CD8-positive, alpha-beta T cell (primary cell): ENCODE measurements at regions of chr10 and their contacts with region 1.

Region 1: GRCh38 chr10:28991326-28992270 is 297.3 kb upstream of the LYZL1 start:
- DNase-seq: peak in 7 of 9 experiments; percentile 5 to 47 (median 27)
- ATAC-seq: no peak
- H3K4me3 ChIP-seq: no peak overlapping the region
- H3K4me3 Mint-ChIP-seq: no peak overlapping the region
- H3K27ac ChIP-seq: no peak overlapping the region
- H3K27ac Mint-ChIP-seq: no peak overlapping the region
- H3K4me1 ChIP-seq: no peaks in the 10 kb centered on the region
- H3K4me1 Mint-ChIP-seq: no peaks in the 10 kb centered on the region
- H3K27me3 ChIP-seq: no peaks in the 10 kb centered on the region
- H3K27me3 Mint-ChIP-seq: peaks cover 9% of the 10 kb centered on the region
- CTCF ChIP-seq: no peak

Region 2: GRCh38 chr10:28676968-28677887 is 314.4 kb before region 1 on chr10 and contains the start of gene BAMBI:
- CTCF ChIA-PET with region 1: no interaction called
- POLR2A ChIA-PET with region 1: interaction called, 4 read pairs
- intact Hi-C with region 1: loop called in 1 of 2 experiments (anchors 5 kb)
- DNase-seq: peak; percentile 76 to 95 (median 88)
- ATAC-seq: peak; percentile 96
- H3K4me3 ChIP-seq: peak within 1 kb of the TSS; percentile 53 to 59
- H3K4me3 Mint-ChIP-seq: peak within 1 kb of the TSS; percentile 86
- H3K27ac ChIP-seq: no peak within 1 kb of the TSS
- H3K27ac Mint-ChIP-seq: no peak within 1 kb of the TSS
- H3K4me1 ChIP-seq: peaks cover 34% of the 10 kb centered on the region
- H3K4me1 Mint-ChIP-seq: peaks cover 31% of the 10 kb centered on the region
- H3K27me3 ChIP-seq: peaks cover 19 to 20% of the 10 kb centered on the region in 2 experiments
- H3K27me3 Mint-ChIP-seq: peaks cover 68% of the 10 kb centered on the region
- CTCF ChIP-seq: peak; percentile 40
- total RNA-seq, gene BAMBI: 3.5 to 3.6 TPM

Region 3: DNA sequence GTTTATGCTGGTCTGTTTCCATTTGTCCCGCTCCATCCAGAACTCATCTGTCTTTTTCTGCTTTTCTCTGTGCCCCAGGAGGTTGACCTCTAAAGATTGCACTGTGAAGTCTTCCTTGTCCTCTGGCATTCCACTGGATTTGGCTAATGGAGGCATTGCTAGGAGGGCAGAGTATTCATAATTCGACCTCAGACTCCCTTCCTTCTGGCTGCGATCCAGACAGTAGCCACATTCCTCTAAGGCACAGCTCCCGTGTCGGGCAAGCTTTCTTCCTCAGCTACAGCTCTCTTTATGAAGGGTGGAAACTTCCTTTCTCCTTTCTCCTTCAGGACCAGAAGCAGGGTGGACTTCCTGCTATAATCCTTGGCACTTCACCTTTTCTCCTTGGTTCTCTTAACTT is 138.4 kb before region 1 on chr10:
- CTCF ChIA-PET with region 1: no interaction called
- POLR2A ChIA-PET with region 1: no interaction called
- intact Hi-C with region 1: no loop called
- DNase-seq: no peak
- ATAC-seq: no peak
- H3K4me3 ChIP-seq: no peak overlapping the region
- H3K4me3 Mint-ChIP-seq: no peak overlapping the region
- H3K27ac ChIP-seq: no peak overlapping the region
- H3K27ac Mint-ChIP-seq: no peak overlapping the region
- H3K4me1 ChIP-seq: no peaks in the 10 kb centered on the region
- H3K4me1 Mint-ChIP-seq: no peaks in the 10 kb centered on the region
- H3K27me3 ChIP-seq: no peaks in the 10 kb centered on the region
- H3K27me3 Mint-ChIP-seq: peaks cover 6% of the 10 kb centered on the region
- CTCF ChIP-seq: no peak

Region 4: GRCh38 chr10:29119374-29119773 is 127.8 kb after region 1 on chr10:
- CTCF ChIA-PET with region 1: no interaction called
- POLR2A ChIA-PET with region 1: no interaction called
- intact Hi-C with region 1: no loop called
- DNase-seq: peak in 1 of 9 experiments; percentile 2
- ATAC-seq: no peak
- H3K4me3 ChIP-seq: no peak overlapping the region
- H3K4me3 Mint-ChIP-seq: no peak overlapping the region
- H3K27ac ChIP-seq: no peak overlapping the region
- H3K27ac Mint-ChIP-seq: no peak overlapping the region
- H3K4me1 ChIP-seq: no peaks in the 10 kb centered on the region
- H3K4me1 Mint-ChIP-seq: no peaks in the 10 kb centered on the region
- H3K27me3 ChIP-seq: no peaks in the 10 kb centered on the region
- H3K27me3 Mint-ChIP-seq: peaks cover 3% of the 10 kb centered on the region
- CTCF ChIP-seq: no peak